PC-9 (cell line): ENCODE measurements at regions of chr3 and their contacts with region 1.

Region 1: GRCh38 chr3:132464066-132464465 is 46.8 kb downstream of the DNAJC13 start:
- DNase-seq: no peak
- H3K4me3 ChIP-seq: no peak overlapping the region
- H3K27ac ChIP-seq: no peak overlapping the region
- H3K4me1 ChIP-seq: no peaks in the 10 kb centered on the region
- H3K27me3 ChIP-seq: no peaks in the 10 kb centered on the region
- CTCF ChIP-seq: no peak

Region 2: GRCh38 chr3:132488151-132488550 is 24.1 kb after region 1 on chr3:
- CTCF ChIA-PET with region 1: no interaction called
- POLR2A ChIA-PET with region 1: interaction called, 13 read pairs
- intact Hi-C with region 1: no loop called
- DNase-seq: no peak
- H3K4me3 ChIP-seq: no peak overlapping the region
- H3K27ac ChIP-seq: no peak overlapping the region
- H3K4me1 ChIP-seq: peaks cover 9% of the 10 kb centered on the region
- H3K27me3 ChIP-seq: no peaks in the 10 kb centered on the region
- CTCF ChIP-seq: no peak

Region 3: DNA sequence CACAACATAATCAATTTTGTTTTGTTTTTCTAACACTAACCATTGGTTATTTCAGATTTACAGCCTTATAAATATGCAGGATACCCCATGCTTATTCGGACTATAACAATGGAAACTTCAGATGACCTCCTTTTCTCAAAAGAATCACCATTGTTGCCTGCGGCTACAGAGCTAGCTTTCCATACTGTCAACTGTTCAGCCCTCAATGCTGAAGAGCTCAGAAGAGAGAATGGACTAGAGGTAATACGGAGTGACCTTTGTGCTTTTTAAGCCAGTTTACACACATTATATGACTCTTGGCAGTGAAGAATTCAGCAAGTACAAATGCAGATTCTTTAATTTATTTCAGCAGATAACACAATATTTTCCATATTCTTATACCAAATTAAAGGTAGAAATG is 35.0 kb after region 1 on chr3:
- CTCF ChIA-PET with region 1: no interaction called
- POLR2A ChIA-PET with region 1: no interaction called
- intact Hi-C with region 1: loop called (anchors 5 kb)
- DNase-seq: no peak
- H3K4me3 ChIP-seq: no peak overlapping the region
- H3K27ac ChIP-seq: no peak overlapping the region
- H3K4me1 ChIP-seq: no peaks in the 10 kb centered on the region
- H3K27me3 ChIP-seq: no peaks in the 10 kb centered on the region
- CTCF ChIP-seq: no peak